ENCODE measurements at regions of chr5 and their contacts with region 1.

Region 1: DNA sequence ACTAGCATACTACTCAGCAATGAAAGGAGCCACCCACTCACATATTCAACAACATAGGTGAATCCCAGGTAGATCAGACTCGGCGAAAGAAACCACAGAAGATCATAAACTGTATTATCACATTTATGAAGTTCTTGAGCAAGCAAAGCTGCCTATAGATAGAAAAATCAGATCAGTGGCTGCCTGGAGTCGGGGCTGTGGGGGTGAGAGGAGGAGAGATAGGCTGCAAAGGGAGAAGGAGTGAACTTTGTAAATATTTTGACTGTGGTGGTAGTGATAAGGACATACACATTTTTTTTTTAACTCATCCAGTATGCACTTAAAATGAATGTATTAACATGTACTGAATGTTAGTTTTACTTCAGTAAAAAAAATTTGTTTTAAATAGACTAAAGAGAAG is 23.5 kb upstream of the TMEM174 start:
- DNase-seq: no peak
- ATAC-seq: peak; percentile 40; the same call in 1 of the 2 replicates
- H3K4me3 ChIP-seq: no peak overlapping the region
- H3K27ac ChIP-seq: no peak overlapping the region
- H3K4me1 ChIP-seq: peaks cover 3% of the 10 kb centered on the region; the same call in 1 of the 2 replicates
- H3K27me3 ChIP-seq: peaks cover 7% of the 10 kb centered on the region
- CTCF ChIP-seq: no peak
- POLR2A ChIP-seq: no peak
- RAD21 ChIP-seq: no peak

Region 2: GRCh38 chr5:73189871-73190376 is 40.4 kb after region 1 on chr5:
- CTCF ChIA-PET with region 1: no interaction called
- POLR2A ChIA-PET with region 1: no interaction called
- dilution Hi-C with region 1: no loop called
- in situ Hi-C with region 1: no loop called
- intact Hi-C with region 1: loop called (anchors 5 kb)
- DNase-seq: peak; percentile 72
- ATAC-seq: peak; percentile 68
- H3K4me3 ChIP-seq: no peak overlapping the region
- H3K27ac ChIP-seq: peak overlapping the region; percentile 76; the same call in 1 of the 2 replicates
- H3K4me1 ChIP-seq: peaks cover 13% of the 10 kb centered on the region
- H3K27me3 ChIP-seq: peaks cover 5% of the 10 kb centered on the region
- CTCF ChIP-seq: no peak
- POLR2A ChIP-seq: no peak
- RAD21 ChIP-seq: no peak

Region 3: GRCh38 chr5:73201547-73202513 is 52.3 kb after region 1 on chr5:
- CTCF ChIA-PET with region 1: no interaction called
- POLR2A ChIA-PET with region 1: no interaction called
- dilution Hi-C with region 1: no loop called
- in situ Hi-C with region 1: no loop called
- intact Hi-C with region 1: no loop called
- DNase-seq: peak; percentile 47
- ATAC-seq: peak; percentile 99
- H3K4me3 ChIP-seq: no peak overlapping the region
- H3K27ac ChIP-seq: no peak overlapping the region
- H3K4me1 ChIP-seq: no peaks in the 10 kb centered on the region
- H3K27me3 ChIP-seq: peaks cover 11% of the 10 kb centered on the region
- CTCF ChIP-seq: peak; percentile 78
- POLR2A ChIP-seq: no peak
- RAD21 ChIP-seq: peak; percentile 69

Region 4: DNA sequence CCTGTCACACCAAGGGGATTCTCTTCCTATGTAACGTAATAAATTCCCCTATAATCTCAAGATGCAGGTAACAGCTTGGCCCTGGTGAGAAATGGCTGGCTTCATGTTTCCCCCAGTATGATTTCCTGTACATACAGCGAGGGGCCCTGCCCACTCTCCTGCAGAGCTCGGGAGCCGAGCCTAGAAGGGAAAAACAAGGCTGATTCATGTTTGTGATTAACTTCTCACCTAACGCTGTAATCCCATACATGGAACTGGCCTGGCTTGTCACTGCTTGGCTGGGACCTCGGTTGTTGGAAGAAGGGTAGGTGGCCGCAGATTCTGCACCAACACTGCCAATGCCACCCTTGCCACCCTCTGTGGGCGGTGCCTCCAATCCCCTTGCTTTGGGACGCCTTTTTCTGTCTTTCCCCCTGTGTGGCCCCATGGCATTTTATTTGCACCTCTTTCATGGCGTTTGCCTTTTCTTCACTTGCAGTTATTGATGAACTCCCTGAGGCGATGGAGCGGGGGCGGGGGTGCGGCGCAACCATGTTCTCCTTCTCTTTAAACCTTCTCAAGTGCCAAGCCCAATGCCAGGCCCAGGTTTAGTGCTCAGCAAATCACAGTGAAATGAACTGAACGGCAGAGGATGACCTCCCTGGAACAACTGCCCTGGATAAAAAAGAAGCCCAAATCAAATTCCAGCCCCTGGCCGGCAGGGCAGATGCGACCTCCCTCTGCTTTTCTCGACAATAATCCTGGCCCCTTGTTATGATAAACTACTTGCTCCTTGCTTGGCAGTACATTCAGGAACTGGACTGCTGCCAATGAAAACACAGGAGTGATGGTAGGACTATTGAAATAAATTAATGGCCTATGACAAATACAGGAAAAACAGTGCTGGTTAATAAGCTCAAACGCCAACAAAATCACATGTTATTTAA is 131.5 kb after region 1 on chr5:
- CTCF ChIA-PET with region 1: no interaction called
- POLR2A ChIA-PET with region 1: no interaction called
- dilution Hi-C with region 1: no loop called
- in situ Hi-C with region 1: no loop called
- intact Hi-C with region 1: no loop called
- DNase-seq: peak; percentile 65
- ATAC-seq: peak; percentile 32; the same call in 1 of the 2 replicates
- H3K4me3 ChIP-seq: no peak overlapping the region
- H3K27ac ChIP-seq: no peak overlapping the region
- H3K4me1 ChIP-seq: peaks cover 6% of the 10 kb centered on the region; the same call in 1 of the 2 replicates
- H3K27me3 ChIP-seq: peaks cover 6% of the 10 kb centered on the region
- CTCF ChIP-seq: no peak
- POLR2A ChIP-seq: no peak
- RAD21 ChIP-seq: no peak

Measured in IMR-90 (cell line).